Activated T-helper 1 cell treated with anti-CD3 and anti-CD28 coated beads, Interleukin-12 subunit alpha, Interleukin-12 subunit beta, Interleukin-2, Interleukin-4 antibody, amounts not matched to agents 30 ng/mL and 10 ng/mL and 1 ng/mL, durations not matched to agents 14 hours and 24 hours and 36 hours (primary cell): ENCODE measurements at regions of chr1 and their contacts with region 1.

Region 1: DNA sequence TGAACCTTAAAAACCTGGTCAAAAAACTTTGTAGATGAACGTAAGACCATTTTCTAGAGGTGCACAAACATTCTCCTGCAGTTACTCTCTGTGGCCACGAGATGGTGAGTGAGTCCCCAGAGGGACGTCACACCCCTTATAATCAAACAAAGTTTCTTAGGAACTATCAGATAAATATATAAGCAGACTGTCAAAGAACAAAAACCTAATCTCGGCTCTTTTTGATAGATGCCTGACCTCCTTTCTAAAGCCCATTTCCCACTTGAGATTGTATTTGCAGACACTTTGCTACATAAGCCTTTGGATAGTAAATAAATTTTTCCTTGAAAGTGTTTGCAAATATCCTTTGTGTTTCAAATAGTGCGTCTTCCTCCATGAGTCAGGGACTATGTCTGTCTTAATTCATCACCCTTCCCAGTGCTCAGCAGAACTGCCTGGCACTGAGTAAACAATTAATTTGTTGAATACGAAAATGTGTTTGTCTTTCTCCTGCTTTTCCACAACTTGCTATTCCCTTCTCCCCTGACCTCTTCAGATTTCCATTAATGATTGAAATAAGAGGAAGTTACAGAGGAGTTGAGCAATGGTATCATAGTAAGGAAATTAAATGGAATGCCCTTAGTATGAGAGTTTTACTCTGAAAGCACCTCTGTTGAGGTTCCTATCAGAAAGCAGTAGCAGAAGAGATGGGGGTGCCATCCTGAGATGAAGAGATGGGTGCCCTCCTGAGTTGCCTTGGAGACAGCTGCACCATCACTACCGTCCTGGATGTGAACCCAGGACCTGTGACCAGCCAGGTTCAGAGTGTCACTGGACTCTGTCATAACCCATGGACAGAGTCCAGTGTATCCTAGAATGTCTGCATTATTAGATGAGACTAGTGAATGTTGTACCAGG is 57.8 kb upstream of the RAVER2 start:
- DNase-seq: no peak
- H3K4me3 Mint-ChIP-seq: no peak overlapping the region
- H3K27ac Mint-ChIP-seq: no peak overlapping the region
- H3K4me1 Mint-ChIP-seq: peaks cover 7% of the 10 kb centered on the region
- H3K27me3 Mint-ChIP-seq: no peaks in the 10 kb centered on the region

Region 2: DNA sequence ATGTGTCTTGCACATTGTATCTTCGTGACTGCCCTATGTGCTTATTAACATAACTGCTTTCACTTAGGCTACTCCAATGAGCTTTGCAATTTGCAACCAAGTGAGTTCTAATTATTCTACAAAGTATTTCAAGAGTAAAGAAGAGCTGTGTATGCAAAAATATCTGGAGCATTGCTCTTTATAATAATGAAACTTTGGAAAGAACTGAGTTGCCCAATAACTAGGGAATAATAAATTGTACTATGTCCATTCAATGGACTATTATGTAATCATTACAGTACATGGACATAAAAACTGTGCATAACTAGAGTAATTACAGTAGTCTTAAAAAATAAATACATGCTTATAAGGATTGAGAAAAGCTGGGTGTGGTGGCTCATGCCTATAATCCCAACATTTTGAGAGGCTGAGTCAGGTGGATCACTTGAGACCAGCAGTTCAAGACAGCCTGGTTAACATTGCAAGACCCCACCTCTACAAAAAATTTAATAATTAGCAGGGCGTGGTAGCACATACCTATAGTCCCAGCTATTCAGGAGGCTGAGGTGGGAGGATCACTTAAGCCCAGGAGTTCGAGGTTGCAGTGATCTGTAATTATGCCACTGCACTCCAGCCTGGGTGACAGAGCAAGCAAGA is 349.6 kb after region 1 on chr1:
- intact Hi-C with region 1: loop called (anchors 1 kb)
- DNase-seq: no peak
- H3K4me3 Mint-ChIP-seq: no peak overlapping the region
- H3K27ac Mint-ChIP-seq: no peak overlapping the region
- H3K4me1 Mint-ChIP-seq: peaks cover 9% of the 10 kb centered on the region
- H3K27me3 Mint-ChIP-seq: peaks cover 5% of the 10 kb centered on the region